Natural killer cell (primary cell): ENCODE measurements at regions of chr13 and their contacts with region 1.

Region 1: DNA sequence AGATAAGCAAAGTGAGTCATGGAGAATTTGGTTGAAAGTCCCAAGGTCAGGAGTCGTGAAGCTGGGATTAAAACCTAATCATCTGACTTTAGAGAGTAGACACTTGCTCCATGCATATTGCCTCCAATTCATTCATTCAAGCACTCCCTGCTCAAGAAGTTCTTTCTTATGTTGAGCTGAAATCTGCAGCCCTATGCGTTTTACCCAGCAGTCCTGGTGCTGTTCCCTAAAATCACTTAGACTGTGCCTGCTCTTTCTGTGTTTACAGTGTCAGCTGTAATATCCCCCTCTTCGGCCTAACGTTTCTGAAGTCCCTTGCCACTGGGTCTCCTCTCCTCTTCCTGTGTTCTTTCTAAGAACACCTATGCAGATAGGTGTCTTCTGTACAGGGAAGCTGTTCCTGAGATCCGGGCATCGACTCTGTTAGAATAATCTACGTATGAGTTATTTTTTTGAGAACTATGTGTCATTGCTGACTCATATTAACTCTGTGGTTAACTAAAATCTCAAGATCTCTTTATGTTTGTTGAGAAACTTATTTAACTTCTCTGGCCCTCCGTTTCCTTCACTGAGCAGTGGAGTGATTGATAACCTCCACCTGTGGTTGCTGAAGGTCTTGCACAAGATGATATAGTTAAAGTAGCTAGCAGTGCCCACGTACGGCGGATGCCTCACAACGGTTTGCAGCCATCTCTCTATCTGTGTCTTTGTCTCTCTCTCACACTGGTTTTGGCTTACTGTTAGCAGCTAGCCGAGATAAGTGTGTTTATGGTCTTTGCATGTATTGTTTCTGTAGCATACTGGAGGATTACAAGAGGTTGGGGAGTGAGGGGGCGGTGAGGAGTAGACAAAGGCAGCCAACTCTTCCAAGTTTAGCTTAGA is 4.7 kb downstream of the ALOX5AP start:
- DNase-seq: peak in 1 of 2 donors; percentile 84
- ATAC-seq: peak; percentile 32 to 67 (median 35)
- H3K4me3 ChIP-seq: peak overlapping the region; percentile 11
- H3K4me3 Mint-ChIP-seq: peak overlapping the region; percentile 81
- H3K27ac ChIP-seq: peak overlapping the region; percentile 70
- H3K27ac Mint-ChIP-seq: peak overlapping the region; percentile 90 to 91
- H3K4me1 ChIP-seq: peaks cover 87% of the 10 kb centered on the region
- H3K4me1 Mint-ChIP-seq: peaks cover 80 to 83% of the 10 kb centered on the region in 2 donors
- H3K27me3 ChIP-seq: no peaks in the 10 kb centered on the region
- H3K27me3 Mint-ChIP-seq: no peaks in the 10 kb centered on the region
- CTCF ChIP-seq: no peak

Region 2: GRCh38 chr13:30145709-30146367 is 594.2 kb before region 1 on chr13:
- intact Hi-C with region 1: loop called (anchors 1 kb)
- DNase-seq: peak in 1 of 2 donors; percentile 28
- ATAC-seq: no peak
- H3K4me3 ChIP-seq: no peak overlapping the region
- H3K4me3 Mint-ChIP-seq: peak overlapping the region; percentile 66
- H3K27ac ChIP-seq: peak overlapping the region; percentile 79
- H3K27ac Mint-ChIP-seq: peak overlapping the region; percentile 95 to 97
- H3K4me1 ChIP-seq: peaks cover 83% of the 10 kb centered on the region
- H3K4me1 Mint-ChIP-seq: peaks cover 91 to 93% of the 10 kb centered on the region in 2 donors
- H3K27me3 ChIP-seq: no peaks in the 10 kb centered on the region
- H3K27me3 Mint-ChIP-seq: no peaks in the 10 kb centered on the region
- CTCF ChIP-seq: no peak

Region 3: GRCh38 chr13:30617315-30618185 is 122.5 kb before region 1 on chr13 and contains the start of gene USPL1:
- intact Hi-C with region 1: loop called (anchors 2 kb)
- DNase-seq: peak; percentile 98 to 100
- ATAC-seq: peak; percentile 84 to 96 (median 88)
- H3K4me3 ChIP-seq: peak within 1 kb of the TSS; percentile 100
- H3K4me3 Mint-ChIP-seq: no peak within 1 kb of the TSS
- H3K27ac ChIP-seq: peak within 1 kb of the TSS; percentile 98
- H3K27ac Mint-ChIP-seq: no peak within 1 kb of the TSS
- H3K4me1 ChIP-seq: peaks cover 7% of the 10 kb centered on the region
- H3K4me1 Mint-ChIP-seq: peaks cover 0 to 5% of the 10 kb centered on the region in 2 donors
- H3K27me3 ChIP-seq: no peaks in the 10 kb centered on the region
- H3K27me3 Mint-ChIP-seq: no peaks in the 10 kb centered on the region
- CTCF ChIP-seq: no peak
- total RNA-seq, gene USPL1: 34.8 to 39.0 (median 36.9) TPM

Region 4: DNA sequence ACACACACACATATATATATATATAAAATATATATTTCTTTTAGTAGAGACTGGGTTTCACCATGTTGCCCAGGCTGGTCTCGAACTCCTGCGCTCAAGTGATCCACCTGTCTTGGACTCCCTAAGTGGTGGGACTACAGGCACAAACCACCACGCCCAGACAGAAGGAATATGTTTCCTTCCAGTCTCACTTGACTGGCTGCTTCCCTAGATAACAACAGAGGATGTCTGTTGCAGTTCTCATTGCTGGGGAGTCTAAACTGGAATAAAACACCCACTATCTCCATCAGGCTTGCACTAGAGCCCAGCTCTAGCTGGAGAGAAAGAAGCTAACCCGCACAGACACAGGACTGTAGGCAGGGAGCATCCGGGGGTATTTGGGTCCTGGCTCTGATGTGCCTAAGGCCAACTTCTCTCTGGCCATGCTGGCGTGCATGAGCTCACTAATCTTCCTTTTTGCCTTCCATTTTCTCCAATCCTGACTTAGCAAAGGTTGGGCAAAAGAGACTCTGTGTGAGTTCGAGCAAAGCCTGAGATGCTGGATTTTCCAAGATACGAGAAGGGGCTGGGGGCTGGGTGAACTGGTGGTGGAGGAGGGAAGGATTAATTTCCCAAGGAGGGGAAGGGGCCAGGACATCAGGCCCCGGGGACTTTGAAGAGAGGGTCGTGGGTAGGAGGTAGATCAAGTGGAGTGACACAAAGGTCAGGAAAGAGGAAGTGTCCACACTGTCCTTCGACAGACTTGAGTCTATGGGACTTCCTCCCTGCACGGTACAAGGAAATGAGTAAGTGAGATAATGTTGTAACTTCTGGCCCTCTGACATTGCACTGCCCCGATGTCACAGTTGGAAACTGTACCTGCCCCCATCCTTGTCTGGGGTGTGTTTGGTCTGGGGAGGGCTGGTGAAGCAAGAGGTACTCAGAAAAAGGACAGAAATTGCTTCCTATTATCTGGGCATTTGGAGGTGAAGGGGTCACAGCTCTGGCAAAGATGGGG is 27.2 kb before region 1 on chr13:
- intact Hi-C with region 1: loop called (anchors 2 kb)
- DNase-seq: peak in 1 of 2 donors; percentile 15
- ATAC-seq: peak; percentile 95 to 96 (median 95)
- H3K4me3 ChIP-seq: no peak overlapping the region
- H3K4me3 Mint-ChIP-seq: peak overlapping the region; percentile 50
- H3K27ac ChIP-seq: no peak overlapping the region
- H3K27ac Mint-ChIP-seq: peak overlapping the region; percentile 72 to 95
- H3K4me1 ChIP-seq: peaks cover 22% of the 10 kb centered on the region
- H3K4me1 Mint-ChIP-seq: peaks cover 15% of the 10 kb centered on the region in 2 donors
- H3K27me3 ChIP-seq: no peaks in the 10 kb centered on the region
- H3K27me3 Mint-ChIP-seq: no peaks in the 10 kb centered on the region
- CTCF ChIP-seq: no peak

Region 5: GRCh38 chr13:30774214-30774730 is 34.3 kb after region 1 on chr13:
- intact Hi-C with region 1: loop called (anchors 2 kb)
- DNase-seq: peak in 1 of 2 donors; percentile 67
- ATAC-seq: peak; percentile 87 to 94 (median 91)
- H3K4me3 ChIP-seq: peak overlapping the region; percentile 8
- H3K4me3 Mint-ChIP-seq: peak overlapping the region; percentile 75
- H3K27ac ChIP-seq: peak overlapping the region; percentile 64
- H3K27ac Mint-ChIP-seq: peak overlapping the region; percentile 85 to 92
- H3K4me1 ChIP-seq: peaks cover 18% of the 10 kb centered on the region
- H3K4me1 Mint-ChIP-seq: peaks cover 33 to 48% of the 10 kb centered on the region in 2 donors
- H3K27me3 ChIP-seq: no peaks in the 10 kb centered on the region
- H3K27me3 Mint-ChIP-seq: no peaks in the 10 kb centered on the region
- CTCF ChIP-seq: no peak